Left cardiac atrium (tissue), 4 donors: ENCODE measurements at regions of chr5 and their contacts with region 1.

Region 1: DNA sequence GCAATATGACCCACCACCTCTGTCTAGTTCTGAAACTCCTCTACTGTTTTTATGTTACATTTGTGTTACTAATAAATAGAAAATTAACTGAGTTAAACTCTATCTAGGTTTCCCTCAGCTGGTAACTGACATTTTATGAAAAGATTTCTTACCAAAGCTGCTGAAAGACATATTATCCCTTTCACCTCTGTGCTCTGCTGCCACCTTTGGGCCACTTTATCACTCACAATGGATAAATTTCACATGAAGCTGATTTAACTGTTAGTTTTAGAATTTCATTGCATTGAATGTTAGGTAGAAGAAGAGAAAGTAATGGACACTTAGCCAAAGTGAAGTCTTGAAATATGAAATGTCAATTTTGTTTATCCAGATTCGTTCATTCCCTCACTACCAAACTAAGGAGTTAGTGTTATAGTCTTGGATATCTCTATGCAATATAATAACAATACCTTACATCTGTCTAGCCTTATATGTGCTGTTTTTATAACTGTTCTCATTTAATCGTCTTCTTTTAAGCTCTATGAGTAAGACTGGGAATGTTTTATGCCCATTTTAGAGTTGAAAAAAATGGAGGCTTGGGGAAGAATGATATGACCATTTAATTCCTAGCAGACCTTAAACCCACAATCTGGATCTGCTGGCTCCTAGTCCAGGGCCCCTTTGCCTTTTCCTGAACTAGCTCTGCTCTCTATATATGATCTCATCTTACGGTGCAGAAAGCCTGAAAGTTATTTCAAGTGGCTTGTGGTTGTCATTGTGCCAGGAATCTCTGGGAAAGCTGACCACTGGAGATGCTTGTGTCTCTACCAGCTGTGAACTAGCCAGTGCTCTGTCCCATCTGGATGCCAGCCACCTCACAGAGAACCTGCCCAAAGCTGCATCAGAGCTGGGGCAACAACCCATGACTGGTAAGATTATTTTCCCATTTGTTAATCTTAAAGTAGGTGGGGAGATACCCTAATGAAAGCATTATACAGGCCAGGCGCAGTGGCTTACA is 97.1 kb downstream of the GOLPH3 start:
- DNase-seq: peak; percentile 51
- ATAC-seq: peak; percentile 75 to 80

Region 2: GRCh38 chr5:31581498-31582099 is 495.4 kb before region 1 on chr5:
- intact Hi-C with region 1: loop called in 1 of 2 experiments (anchors 5 kb)
- DNase-seq: no peak
- ATAC-seq: peak in 1 of 2 donors; percentile 27

Region 3: GRCh38 chr5:31825518-31826068 is 251.4 kb before region 1 on chr5:
- intact Hi-C with region 1: loop called in 1 of 2 experiments (anchors 5 kb)
- DNase-seq: peak; percentile 47
- ATAC-seq: peak; percentile 85 to 88

Region 4: DNA sequence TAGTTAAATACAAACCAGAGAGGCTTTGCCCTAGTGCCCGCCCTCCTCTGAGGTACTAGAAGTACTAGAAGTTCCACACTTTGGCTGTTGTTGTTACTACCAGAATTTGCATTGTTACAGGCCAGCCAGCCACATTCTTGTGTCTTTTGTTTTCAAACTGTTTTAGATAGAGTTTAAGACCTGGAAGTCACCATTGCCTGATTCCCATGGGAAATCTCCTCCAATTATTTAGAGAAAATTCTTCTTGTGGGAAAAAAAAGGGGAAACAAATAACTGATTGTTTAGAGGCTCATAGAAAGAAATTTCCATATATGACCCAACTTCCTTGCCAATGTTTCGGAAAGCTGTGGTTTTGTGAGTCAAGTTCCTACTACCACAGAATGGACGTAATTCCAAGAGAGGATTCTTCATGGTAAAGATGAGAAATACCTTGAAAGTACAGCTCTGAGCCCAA is 155.1 kb before region 1 on chr5:
- intact Hi-C with region 1: loop called in 1 of 2 experiments (anchors 5 kb)
- DNase-seq: no peak
- ATAC-seq: no peak

Region 5: GRCh38 chr5:32057162-32058096 is 19.6 kb before region 1 on chr5:
- intact Hi-C with region 1: no loop called
- DNase-seq: no peak
- ATAC-seq: no peak